ENCODE measurements at regions of chr21 and their contacts with region 1.

Region 1: DNA sequence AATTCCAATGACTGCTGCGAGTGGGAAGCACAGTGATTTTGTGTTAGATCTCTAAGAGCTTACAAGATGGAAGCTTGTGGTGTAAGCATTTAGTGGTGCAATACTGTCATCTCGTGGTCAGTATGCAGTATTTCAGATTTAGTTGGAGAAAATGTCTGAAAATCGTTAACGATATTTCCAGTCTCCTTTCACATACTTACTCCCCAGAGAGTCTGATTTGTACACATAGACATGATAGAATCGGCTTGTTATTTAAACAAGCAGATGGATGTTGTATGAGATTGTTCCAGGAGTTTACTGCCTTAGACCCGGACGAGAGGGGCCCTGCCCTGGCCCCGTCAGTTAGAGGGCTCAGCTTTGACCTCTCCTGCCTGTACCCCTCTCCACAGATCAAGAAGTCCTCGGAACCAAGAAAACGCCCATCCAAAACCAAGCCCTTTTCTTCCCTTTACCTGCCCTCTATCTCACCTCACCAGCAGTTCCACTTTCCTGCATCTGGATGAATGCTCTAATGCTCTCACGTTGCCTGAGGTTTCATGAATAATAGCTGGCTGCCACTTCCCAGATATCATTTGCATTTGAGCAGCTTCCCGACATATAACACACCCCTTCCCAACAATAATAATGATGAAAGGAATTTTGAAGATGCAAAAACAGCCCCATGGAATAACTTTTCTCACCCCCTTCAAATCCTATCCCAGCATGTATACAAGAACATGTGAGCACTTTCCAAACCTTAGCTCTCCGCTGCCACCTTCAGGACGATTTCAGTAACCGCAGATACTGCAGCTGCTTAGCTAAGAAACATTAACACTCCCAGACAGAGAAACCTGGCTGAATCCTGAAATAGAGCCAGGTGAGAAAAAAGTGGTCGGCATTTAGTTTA is 247.3 kb downstream of the LTN1 start:
- DNase-seq: peak; percentile 80
- ATAC-seq: peak; percentile 79
- H3K4me3 Mint-ChIP-seq: no peak overlapping the region
- H3K27ac Mint-ChIP-seq: no peak overlapping the region
- H3K4me1 Mint-ChIP-seq: no peaks in the 10 kb centered on the region
- H3K27me3 Mint-ChIP-seq: no peaks in the 10 kb centered on the region

Region 2: DNA sequence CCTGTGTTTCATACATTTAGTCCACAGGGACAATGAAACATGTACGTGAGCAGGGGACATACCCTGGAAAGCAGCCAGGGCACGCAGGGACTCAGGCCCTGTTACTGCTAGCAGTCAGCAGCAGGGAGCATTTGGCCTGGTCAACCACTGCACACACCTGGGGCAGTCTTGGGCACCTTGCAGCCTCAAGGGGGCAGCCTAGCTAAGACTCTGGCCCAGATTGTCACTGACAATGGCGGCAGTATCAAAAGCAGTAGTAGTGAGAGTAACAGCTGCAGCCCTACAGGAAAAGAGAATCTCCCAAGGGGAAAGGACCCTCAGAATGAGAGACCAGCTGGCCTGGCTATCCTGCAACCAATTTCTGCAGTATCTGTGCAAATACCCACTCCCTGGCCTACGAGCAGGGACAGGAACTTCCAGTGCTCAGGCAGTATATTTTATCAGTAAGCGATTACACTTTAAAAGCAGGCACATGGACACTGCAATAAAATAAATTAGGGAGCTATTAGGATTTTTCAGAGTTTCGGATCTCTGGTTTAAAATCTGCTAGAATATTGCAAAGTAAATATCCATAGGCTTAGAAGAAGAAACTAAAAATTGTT is 228.3 kb before region 1 on chr21:
- CTCF ChIA-PET with region 1: interaction called, 89 read pairs
- DNase-seq: peak; percentile 78
- ATAC-seq: peak; percentile 92
- H3K4me3 Mint-ChIP-seq: no peak overlapping the region
- H3K27ac Mint-ChIP-seq: no peak overlapping the region
- H3K4me1 Mint-ChIP-seq: no peaks in the 10 kb centered on the region
- H3K27me3 Mint-ChIP-seq: peaks cover 8% of the 10 kb centered on the region

Region 3: GRCh38 chr21:28938726-28939125 is 193.4 kb after region 1 on chr21:
- CTCF ChIA-PET with region 1: interaction called, 34 read pairs
- DNase-seq: no peak
- ATAC-seq: no peak
- H3K4me3 Mint-ChIP-seq: no peak overlapping the region
- H3K27ac Mint-ChIP-seq: no peak overlapping the region
- H3K4me1 Mint-ChIP-seq: peaks cover 14% of the 10 kb centered on the region
- H3K27me3 Mint-ChIP-seq: no peaks in the 10 kb centered on the region